ENCODE measurements at regions of chr4 and their contacts with region 1.

Region 1: GRCh38 chr4:99563310-99564186 is at the start of gene TRMT10A:
- DNase-seq: peak; percentile 96
- ATAC-seq: peak; percentile 96
- H3K4me3 ChIP-seq: peak within 1 kb of the TSS; percentile 81 to 85 (median 84)
- H3K27ac ChIP-seq: peak within 1 kb of the TSS; percentile 92
- H3K4me1 ChIP-seq: peaks cover 7% of the 10 kb centered on the region; the same call in 1 of the 2 replicates
- H3K27me3 ChIP-seq: no peaks in the 10 kb centered on the region
- CTCF ChIP-seq: no peak
- EP300 ChIP-seq: no peak; a peak in 1 of 4 replicates
- POLR2A ChIP-seq: peak; percentile 77 to 87
- RAD21 ChIP-seq: no peak
- total RNA-seq, gene TRMT10A: 12.6 and 18.8 TPM in 2 replicates

Region 2: GRCh38 chr4:99574530-99575324 is 11.2 kb after region 1 on chr4 and contains the start of gene MTTP:
- CTCF ChIA-PET with region 1: no interaction called
- POLR2A ChIA-PET with region 1: interaction called, 44 read pairs
- in situ Hi-C with region 1: no loop called
- intact Hi-C with region 1: loop called (anchors 1 kb)
- DNase-seq: peak; percentile 67
- ATAC-seq: peak; percentile 98
- H3K4me3 ChIP-seq: peak within 1 kb of the TSS; percentile 53 to 96 (median 72)
- H3K27ac ChIP-seq: peak within 1 kb of the TSS; percentile 87
- H3K4me1 ChIP-seq: peaks cover 57% of the 10 kb centered on the region
- H3K27me3 ChIP-seq: no peaks in the 10 kb centered on the region
- CTCF ChIP-seq: no peak
- EP300 ChIP-seq: peak in 1 of 2 experiments; percentile 78; a peak in 2 of 4 replicates
- POLR2A ChIP-seq: peak; percentile 79 to 89
- RAD21 ChIP-seq: no peak
- total RNA-seq, gene MTTP: 58.4 and 102 TPM in 2 replicates

Region 3: DNA sequence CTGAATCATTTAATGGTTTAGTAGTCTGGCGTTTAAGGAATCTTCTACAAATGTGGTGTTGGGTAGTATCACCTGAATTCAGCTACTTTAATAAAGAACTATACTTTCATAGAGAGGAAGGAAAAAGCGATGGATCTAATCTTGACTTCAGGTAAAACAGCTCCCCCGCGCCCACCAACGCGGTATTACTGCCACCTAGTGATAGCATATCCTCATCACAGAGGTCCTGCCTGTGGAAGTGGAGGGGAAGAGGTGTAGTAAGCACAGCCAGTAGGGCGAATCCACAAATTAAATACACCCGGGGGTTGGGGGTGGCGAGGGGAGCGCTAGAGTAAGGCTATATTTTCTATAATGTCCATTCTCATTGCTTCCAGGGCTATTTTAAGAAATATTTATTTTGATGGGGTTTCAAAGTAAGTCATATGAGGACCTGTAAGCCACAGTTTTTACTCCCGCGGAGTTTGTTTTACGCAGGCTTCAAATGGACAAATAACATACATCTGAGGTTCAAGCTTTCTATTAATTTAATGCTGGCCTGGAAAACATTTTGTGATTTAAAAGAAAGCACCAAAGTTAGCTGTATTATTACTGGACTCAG is 244.8 kb after region 1 on chr4:
- CTCF ChIA-PET with region 1: interaction called, 23 read pairs
- POLR2A ChIA-PET with region 1: interaction called, 3 read pairs
- in situ Hi-C with region 1: loop called (anchors 5 kb)
- intact Hi-C with region 1: loop called (anchors 1 kb)
- DNase-seq: peak; percentile 49
- ATAC-seq: peak; percentile 96
- H3K4me3 ChIP-seq: no peak overlapping the region
- H3K27ac ChIP-seq: no peak overlapping the region
- H3K4me1 ChIP-seq: no peaks in the 10 kb centered on the region
- H3K27me3 ChIP-seq: no peaks in the 10 kb centered on the region; a peak in 1 of 5 replicates
- CTCF ChIP-seq: peak; percentile 89
- EP300 ChIP-seq: no peak
- POLR2A ChIP-seq: no peak
- RAD21 ChIP-seq: peak; percentile 73

Region 4: GRCh38 chr4:99894161-99894997 is 330.8 kb after region 1 on chr4 and contains the start of gene LAMTOR3:
- CTCF ChIA-PET with region 1: no interaction called
- POLR2A ChIA-PET with region 1: interaction called, 15 read pairs
- in situ Hi-C with region 1: loop called (anchors 10 kb)
- intact Hi-C with region 1: no loop called
- DNase-seq: peak; percentile 86
- ATAC-seq: peak; percentile 99
- H3K4me3 ChIP-seq: peak within 1 kb of the TSS; percentile 87 to 98 (median 94)
- H3K27ac ChIP-seq: peak within 1 kb of the TSS; percentile 76
- H3K4me1 ChIP-seq: peaks cover 23% of the 10 kb centered on the region
- H3K27me3 ChIP-seq: no peaks in the 10 kb centered on the region; a peak in 1 of 5 replicates
- CTCF ChIP-seq: no peak
- EP300 ChIP-seq: no peak
- POLR2A ChIP-seq: peak; percentile 64 to 77
- RAD21 ChIP-seq: no peak
- total RNA-seq, gene LAMTOR3: 47.6 and 81.0 TPM in 2 replicates